Activated T-helper 1 cell treated with anti-CD3 and anti-CD28 coated beads, Interleukin-12 subunit alpha, Interleukin-12 subunit beta, Interleukin-2, Interleukin-4 antibody, amounts not matched to agents 30 ng/mL and 10 ng/mL and 1 ng/mL, durations not matched to agents 14 hours and 24 hours and 36 hours (primary cell): ENCODE measurements at regions of chr11 and their contacts with region 1.

Region 1: DNA sequence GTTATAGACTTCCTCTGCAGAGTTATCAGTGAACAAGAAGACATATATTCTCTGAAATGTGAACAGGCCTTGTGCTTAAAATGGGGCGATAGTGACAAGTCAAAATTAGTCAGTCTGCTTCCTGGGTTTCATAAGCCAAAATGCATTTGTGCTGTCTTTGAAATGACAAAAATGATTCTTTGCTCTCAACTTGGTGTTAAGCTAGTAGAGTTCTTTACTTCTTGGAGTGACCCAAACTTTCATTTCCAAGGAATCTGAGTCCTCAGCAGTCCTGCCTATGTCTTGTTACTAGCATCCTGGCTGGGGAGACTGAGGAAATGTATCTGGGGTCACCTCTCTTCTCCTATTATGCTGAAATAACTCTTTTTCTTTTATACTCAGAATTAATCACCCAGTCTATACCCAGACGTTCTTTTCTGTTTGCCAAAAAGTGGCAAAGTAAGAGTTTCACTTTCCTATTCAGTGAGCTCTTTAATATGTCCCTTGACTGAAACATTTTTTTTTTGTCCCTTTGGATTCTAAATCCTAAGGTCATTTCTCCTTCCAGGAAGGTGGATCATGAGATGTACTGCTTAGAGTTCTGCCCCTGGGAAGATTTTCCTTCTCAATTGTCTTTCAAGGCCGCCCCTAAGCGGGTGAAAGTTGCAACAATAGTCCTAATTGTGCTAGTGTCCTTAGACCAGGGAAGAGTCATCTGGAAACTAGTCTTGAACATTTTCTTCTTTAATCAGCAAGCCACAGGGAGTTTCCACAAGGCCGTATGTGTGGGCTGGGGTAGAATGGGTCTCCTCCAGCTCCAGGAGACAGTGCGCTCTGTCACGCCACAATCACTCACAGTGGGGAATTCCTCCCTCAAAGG is 53.0 kb upstream of the RDX start:
- DNase-seq: peak; percentile 74
- H3K4me3 Mint-ChIP-seq: peak overlapping the region; percentile 62
- H3K27ac Mint-ChIP-seq: peak overlapping the region; percentile 98
- H3K4me1 Mint-ChIP-seq: peaks cover 83% of the 10 kb centered on the region
- H3K27me3 Mint-ChIP-seq: no peaks in the 10 kb centered on the region

Region 2: DNA sequence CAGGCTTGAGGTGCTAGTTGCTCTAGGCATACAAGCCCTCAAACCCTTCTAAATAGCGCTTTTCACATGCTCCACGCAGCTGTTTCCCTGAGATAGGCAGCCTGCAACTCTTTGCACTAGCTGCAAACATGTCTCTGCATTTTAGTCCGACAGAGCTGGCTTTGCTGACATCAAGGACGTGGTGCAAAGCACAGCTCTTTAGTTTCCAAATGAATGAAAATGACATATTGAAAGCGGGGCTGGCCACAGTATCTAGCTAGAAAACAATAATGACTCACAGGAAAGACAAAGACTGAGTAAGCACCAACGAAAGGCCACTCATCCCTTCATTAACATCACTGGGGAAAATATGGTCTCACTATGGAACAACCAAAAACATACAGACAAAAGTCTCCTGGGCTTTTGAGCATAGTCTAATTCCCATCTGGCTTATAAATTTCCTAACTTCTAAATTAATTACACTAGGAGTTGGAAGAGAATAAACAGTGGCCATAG is 271.5 kb before region 1 on chr11:
- intact Hi-C with region 1: loop called (anchors 2 kb)
- DNase-seq: peak; percentile 47
- H3K4me3 Mint-ChIP-seq: peak overlapping the region; percentile 28
- H3K27ac Mint-ChIP-seq: peak overlapping the region; percentile 75
- H3K4me1 Mint-ChIP-seq: peaks cover 38% of the 10 kb centered on the region
- H3K27me3 Mint-ChIP-seq: peaks cover 8% of the 10 kb centered on the region

Region 3: GRCh38 chr11:110311783-110312579 is 37.4 kb before region 1 on chr11:
- intact Hi-C with region 1: loop called (anchors 1 kb)
- DNase-seq: no peak
- H3K4me3 Mint-ChIP-seq: no peak overlapping the region
- H3K27ac Mint-ChIP-seq: peak overlapping the region; percentile 73
- H3K4me1 Mint-ChIP-seq: peaks cover 12% of the 10 kb centered on the region
- H3K27me3 Mint-ChIP-seq: no peaks in the 10 kb centered on the region

Region 4: DNA sequence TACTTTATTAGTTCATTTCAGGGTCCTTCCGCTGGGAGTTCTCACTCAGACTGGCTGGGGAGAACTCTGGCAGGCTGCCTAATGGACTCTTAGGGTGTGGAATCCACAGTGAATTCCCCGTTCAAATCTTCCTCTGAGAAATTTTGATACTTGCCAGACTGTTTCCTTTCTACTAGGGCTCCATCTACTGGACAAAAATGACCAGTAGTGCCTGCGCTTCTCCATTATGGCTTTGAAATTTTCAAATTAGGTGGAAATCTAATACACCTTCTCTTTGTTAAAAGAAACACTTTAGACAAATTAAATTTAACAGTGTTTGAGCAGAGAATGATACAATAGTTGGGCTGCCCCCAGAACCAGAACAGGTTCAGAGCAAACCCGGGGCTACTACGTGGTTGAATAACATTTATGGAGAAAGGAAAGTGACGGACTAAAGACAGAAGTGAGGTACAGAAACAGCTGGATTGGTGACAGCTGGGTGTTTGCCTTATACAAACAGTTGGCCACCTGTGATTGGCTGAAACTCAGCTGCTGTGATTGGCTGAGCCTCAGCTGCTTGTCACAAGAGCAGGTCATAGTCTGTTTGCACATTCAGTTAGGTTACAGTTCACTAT is 27.5 kb after region 1 on chr11:
- intact Hi-C with region 1: loop called (anchors 1 kb)
- DNase-seq: no peak
- H3K4me3 Mint-ChIP-seq: no peak overlapping the region
- H3K27ac Mint-ChIP-seq: no peak overlapping the region
- H3K4me1 Mint-ChIP-seq: peaks cover 40% of the 10 kb centered on the region
- H3K27me3 Mint-ChIP-seq: no peaks in the 10 kb centered on the region

Region 5: DNA sequence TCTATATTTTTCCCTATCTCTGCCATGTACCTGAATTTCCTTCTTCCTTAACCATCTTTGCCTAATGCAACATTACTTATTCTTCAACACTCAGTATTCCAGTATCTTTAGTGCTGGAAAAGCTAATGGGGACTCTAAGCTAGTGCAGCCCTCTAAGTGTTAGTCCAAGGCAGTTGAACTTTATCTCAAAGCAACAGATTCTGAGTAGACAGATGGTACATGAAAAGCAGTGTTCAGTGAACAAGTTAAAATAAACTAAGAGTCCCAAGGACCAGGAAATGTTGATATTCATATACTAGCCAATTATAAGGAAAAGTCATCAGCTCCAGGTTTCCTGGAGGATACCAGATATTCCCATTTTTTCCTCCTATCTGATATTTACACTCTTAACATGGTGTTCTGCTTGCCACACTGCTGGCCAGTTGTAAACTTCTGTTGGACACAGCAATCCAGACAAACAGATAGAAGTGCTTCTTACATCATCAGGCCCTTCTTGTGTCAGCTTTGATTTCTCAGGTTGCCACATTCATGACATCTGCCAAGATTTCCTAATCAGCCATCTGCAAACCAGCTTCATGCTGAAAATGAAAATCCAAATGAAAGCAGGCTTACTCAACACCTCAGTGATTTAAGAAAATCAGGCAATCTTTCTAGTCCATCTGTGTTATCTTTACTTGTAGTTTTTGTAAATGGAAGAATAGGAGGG is 640.2 kb after region 1 on chr11:
- intact Hi-C with region 1: no loop called
- DNase-seq: no peak
- H3K4me3 Mint-ChIP-seq: no peak overlapping the region
- H3K27ac Mint-ChIP-seq: no peak overlapping the region
- H3K4me1 Mint-ChIP-seq: no peaks in the 10 kb centered on the region
- H3K27me3 Mint-ChIP-seq: peaks cover 2% of the 10 kb centered on the region

Region 6: GRCh38 chr11:111378861-111379601 is 1029.7 kb after region 1 on chr11 and contains the start of gene POU2AF1:
- intact Hi-C with region 1: loop called (anchors 1 kb)
- DNase-seq: peak; percentile 71
- H3K4me3 Mint-ChIP-seq: peak within 1 kb of the TSS; percentile 83
- H3K27ac Mint-ChIP-seq: peak within 1 kb of the TSS; percentile 100
- H3K4me1 Mint-ChIP-seq: peaks cover 81% of the 10 kb centered on the region
- H3K27me3 Mint-ChIP-seq: no peaks in the 10 kb centered on the region
- total RNA-seq, gene POU2AF1: 80.7 and 81.0 TPM in 2 replicates